Dendritic cell treated with granulocyte-macrophage colony-stimulating factor and Interleukin-4, amounts not matched to agents 40 ng/mL and 50 ng/mL, for 4 days (primary cell): ENCODE measurements at regions of chr15 and their contacts with region 1.

Region 1: GRCh38 chr15:51051776-51052175 is 42.9 kb downstream of the TNFAIP8L3 start:
- H3K4me3 Mint-ChIP-seq: no peak overlapping the region
- H3K27ac Mint-ChIP-seq: peak overlapping the region; percentile 38
- H3K4me1 Mint-ChIP-seq: peaks cover 45% of the 10 kb centered on the region
- H3K27me3 Mint-ChIP-seq: peaks cover 27% of the 10 kb centered on the region

Region 2: DNA sequence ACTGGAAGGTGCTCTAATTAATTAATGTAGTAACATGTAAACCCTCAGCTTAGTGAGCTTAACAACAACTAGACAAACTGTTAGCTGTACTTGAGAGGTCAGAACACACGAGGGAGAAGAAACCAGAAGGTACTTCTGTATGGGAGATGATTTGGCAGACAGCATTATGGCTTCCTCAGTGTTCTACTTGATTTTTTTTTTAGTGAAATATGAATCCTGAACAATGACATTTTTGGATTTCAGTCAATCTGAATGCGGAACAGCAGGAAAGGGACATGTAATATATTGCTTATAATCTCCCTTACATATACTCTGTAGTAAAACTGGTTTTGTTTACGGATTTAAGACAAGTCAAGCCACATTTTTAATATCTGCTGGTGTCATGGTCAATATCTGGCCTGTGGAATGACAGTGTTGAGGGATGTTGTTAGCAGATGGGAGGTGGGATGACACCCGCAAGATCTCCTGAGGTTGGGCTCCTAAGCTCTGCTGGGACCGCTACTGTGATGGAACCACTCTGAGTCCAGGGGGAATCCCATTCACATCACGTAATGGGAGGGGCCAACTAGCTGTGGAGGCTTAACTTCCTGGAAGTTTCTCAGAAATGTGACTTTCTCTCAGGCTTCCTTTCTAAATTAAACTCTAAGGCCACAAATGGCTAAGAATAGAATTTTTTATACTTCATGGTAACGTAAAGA is 24.2 kb after region 1 on chr15:
- intact Hi-C with region 1: loop called (anchors 1 kb)
- H3K4me3 Mint-ChIP-seq: no peak overlapping the region
- H3K27ac Mint-ChIP-seq: no peak overlapping the region
- H3K4me1 Mint-ChIP-seq: peaks cover 29% of the 10 kb centered on the region
- H3K27me3 Mint-ChIP-seq: peaks cover 27% of the 10 kb centered on the region

Region 3: GRCh38 chr15:51094606-51095569 is 43.1 kb after region 1 on chr15 and contains the start of gene TNFAIP8L3:
- intact Hi-C with region 1: loop called (anchors 5 kb)
- H3K4me3 Mint-ChIP-seq: peak within 1 kb of the TSS; percentile 70
- H3K27ac Mint-ChIP-seq: no peak within 1 kb of the TSS
- H3K4me1 Mint-ChIP-seq: peaks cover 35% of the 10 kb centered on the region
- H3K27me3 Mint-ChIP-seq: peaks cover 78% of the 10 kb centered on the region